ENCODE measurements at regions of chr11 and their contacts with region 1.

Region 1: DNA sequence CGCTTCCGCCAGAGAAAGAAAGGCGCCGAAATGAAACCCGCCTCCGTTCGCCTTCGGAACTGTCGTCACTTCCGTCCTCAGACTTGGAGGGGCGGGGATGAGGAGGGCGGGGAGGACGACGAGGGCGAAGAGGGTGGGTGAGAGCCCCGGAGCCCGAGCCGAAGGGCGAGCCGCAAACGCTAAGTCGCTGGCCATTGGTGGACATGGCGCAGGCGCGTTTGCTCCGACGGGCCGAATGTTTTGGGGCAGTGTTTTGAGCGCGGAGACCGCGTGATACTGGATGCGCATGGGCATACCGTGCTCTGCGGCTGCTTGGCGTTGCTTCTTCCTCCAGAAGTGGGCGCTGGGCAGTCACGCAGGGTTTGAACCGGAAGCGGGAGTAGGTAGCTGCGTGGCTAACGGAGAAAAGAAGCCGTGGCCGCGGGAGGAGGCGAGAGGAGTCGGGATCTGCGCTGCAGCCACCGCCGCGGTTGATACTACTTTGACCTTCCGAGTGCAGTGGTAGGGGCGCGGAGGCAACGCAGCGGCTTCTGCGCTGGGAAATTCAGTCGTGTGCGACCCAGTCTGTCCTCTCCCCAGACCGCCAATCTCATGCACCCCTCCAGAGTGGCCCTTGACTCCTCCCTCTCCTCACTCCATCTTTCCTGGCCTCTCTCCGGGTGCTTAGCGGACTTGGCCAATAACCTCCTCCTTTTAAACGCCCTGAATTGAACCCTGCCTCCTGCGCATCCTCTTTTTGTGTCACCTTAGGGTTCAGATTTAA is at the start of gene ATM:
- DNase-seq: peak; percentile 99
- H3K4me3 Mint-ChIP-seq: no peak within 1 kb of the TSS
- H3K27ac Mint-ChIP-seq: no peak within 1 kb of the TSS
- H3K4me1 Mint-ChIP-seq: peaks cover 34% of the 10 kb centered on the region
- H3K27me3 Mint-ChIP-seq: no peaks in the 10 kb centered on the region
- total RNA-seq, gene ATM: 29.5 to 30.6 TPM

Region 2: GRCh38 chr11:107565219-107565937 is 657.5 kb before region 1 on chr11 and contains the start of gene ALKBH8:
- CTCF ChIA-PET with region 1: no interaction called
- intact Hi-C with region 1: loop called (anchors 5 kb)
- DNase-seq: peak; percentile 89
- H3K4me3 Mint-ChIP-seq: peak within 1 kb of the TSS; percentile 85
- H3K27ac Mint-ChIP-seq: peak within 1 kb of the TSS; percentile 92
- H3K4me1 Mint-ChIP-seq: peaks cover 48% of the 10 kb centered on the region
- H3K27me3 Mint-ChIP-seq: no peaks in the 10 kb centered on the region
- total RNA-seq, gene ALKBH8: 10.1 to 12.2 TPM

Region 3: GRCh38 chr11:108121274-108122155 is 101.4 kb before region 1 on chr11 and contains the start of gene ACAT1:
- CTCF ChIA-PET with region 1: interaction called, 5 read pairs
- intact Hi-C with region 1: loop called (anchors 1 kb)
- DNase-seq: peak; percentile 96
- H3K4me3 Mint-ChIP-seq: peak within 1 kb of the TSS; percentile 85
- H3K27ac Mint-ChIP-seq: peak within 1 kb of the TSS; percentile 16
- H3K4me1 Mint-ChIP-seq: peaks cover 40% of the 10 kb centered on the region
- H3K27me3 Mint-ChIP-seq: no peaks in the 10 kb centered on the region
- total RNA-seq, gene ACAT1: 54.9 to 55.0 TPM

Region 4: DNA sequence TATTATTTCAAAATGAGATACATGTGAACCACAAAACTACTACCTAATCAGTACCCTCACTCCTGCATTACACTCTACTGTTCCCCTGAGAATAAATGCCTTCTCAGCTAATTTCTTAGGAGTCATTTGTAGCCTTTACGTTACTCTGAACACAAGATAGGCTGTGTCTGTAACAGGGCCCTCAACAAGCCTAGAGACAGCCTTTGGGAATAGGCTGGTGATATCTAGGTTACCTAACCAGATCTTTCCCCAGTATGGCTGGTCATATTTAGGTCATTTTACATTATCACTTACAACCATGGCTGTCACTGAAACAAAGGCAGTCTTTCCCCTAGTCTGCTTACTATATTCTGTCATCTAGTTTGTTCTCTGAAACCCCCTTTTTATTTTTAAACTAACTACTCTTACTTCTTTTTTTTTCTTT is 14.2 kb after region 1 on chr11:
- CTCF ChIA-PET with region 1: interaction called, 87 read pairs
- intact Hi-C with region 1: loop called (anchors 1 kb)
- DNase-seq: no peak
- H3K4me3 Mint-ChIP-seq: peak overlapping the region; percentile 64
- H3K27ac Mint-ChIP-seq: peak overlapping the region; percentile 91
- H3K4me1 Mint-ChIP-seq: peaks cover 75% of the 10 kb centered on the region
- H3K27me3 Mint-ChIP-seq: no peaks in the 10 kb centered on the region

Region 5: GRCh38 chr11:108302121-108302785 is 79.4 kb after region 1 on chr11:
- CTCF ChIA-PET with region 1: no interaction called
- intact Hi-C with region 1: loop called (anchors 1 kb)
- DNase-seq: no peak
- H3K4me3 Mint-ChIP-seq: no peak overlapping the region
- H3K27ac Mint-ChIP-seq: peak overlapping the region; percentile 50
- H3K4me1 Mint-ChIP-seq: peaks cover 36% of the 10 kb centered on the region
- H3K27me3 Mint-ChIP-seq: no peaks in the 10 kb centered on the region

Region 6: GRCh38 chr11:108593214-108593922 is 370.5 kb after region 1 on chr11 and contains the start of gene EXPH5:
- CTCF ChIA-PET with region 1: no interaction called
- intact Hi-C with region 1: loop called (anchors 1 kb)
- DNase-seq: peak; percentile 95
- H3K4me3 Mint-ChIP-seq: peak within 1 kb of the TSS; percentile 88
- H3K27ac Mint-ChIP-seq: peak within 1 kb of the TSS; percentile 54
- H3K4me1 Mint-ChIP-seq: peaks cover 13% of the 10 kb centered on the region
- H3K27me3 Mint-ChIP-seq: peaks cover 3% of the 10 kb centered on the region
- total RNA-seq, gene EXPH5: 2.9 to 3.3 TPM

Region 7: DNA sequence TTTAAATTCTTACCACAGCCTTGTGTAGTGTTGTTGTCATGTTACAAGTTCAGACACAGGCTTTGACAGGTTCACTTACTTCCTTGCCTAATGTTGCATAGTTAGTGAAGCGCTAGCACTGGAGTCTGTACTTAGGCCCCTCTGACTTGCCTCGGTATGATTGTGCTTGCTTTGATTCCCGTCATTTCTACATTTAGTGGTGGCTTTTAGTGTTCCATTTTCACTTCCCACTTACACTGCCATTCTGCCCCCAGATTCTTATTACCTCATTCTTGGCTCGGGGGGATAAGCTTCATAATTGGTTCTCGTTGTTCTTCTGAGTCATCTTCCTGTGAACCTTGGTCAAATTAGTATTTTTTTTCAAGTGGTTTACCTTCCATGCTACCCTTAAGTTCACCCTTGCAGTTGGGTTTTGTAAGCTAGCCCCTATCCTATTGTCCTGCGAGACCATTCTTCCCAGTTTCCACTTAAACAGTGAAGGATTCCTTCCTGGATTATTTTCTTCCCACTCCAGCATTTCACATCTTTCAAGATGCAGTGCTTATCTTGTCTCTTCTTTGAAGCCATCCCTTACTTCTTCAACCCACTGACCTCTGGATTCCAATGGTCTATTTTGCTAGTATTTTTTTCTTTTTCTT is 510.7 kb after region 1 on chr11:
- CTCF ChIA-PET with region 1: no interaction called
- intact Hi-C with region 1: loop called (anchors 1 kb)
- DNase-seq: peak; percentile 72
- H3K4me3 Mint-ChIP-seq: no peak overlapping the region
- H3K27ac Mint-ChIP-seq: peak overlapping the region; percentile 82
- H3K4me1 Mint-ChIP-seq: peaks cover 41% of the 10 kb centered on the region
- H3K27me3 Mint-ChIP-seq: no peaks in the 10 kb centered on the region

Measured in activated naive CD4-positive, alpha-beta T cell treated with anti-CD3 and anti-CD28 coated beads for 36 hours (primary cell).